Ovary (tissue), 10 donors: ENCODE measurements at regions of chr22 and their contacts with region 1.

Region 1: GRCh38 chr22:31345331-31346254 is 553 bp downstream of the PATZ1 start:
- DNase-seq: peak; percentile 84 to 91 (median 89)
- H3K4me3 ChIP-seq: peak overlapping the region; percentile 73
- H3K27ac ChIP-seq: peak overlapping the region; percentile 65 to 72
- H3K4me1 ChIP-seq: peaks cover 10% of the 10 kb centered on the region
- H3K27me3 ChIP-seq: no peaks in the 10 kb centered on the region
- CTCF ChIP-seq: peak; percentile 76 to 97 (median 96)
- EP300 ChIP-seq: no peak
- POLR2A ChIP-seq: no peak

Region 2: DNA sequence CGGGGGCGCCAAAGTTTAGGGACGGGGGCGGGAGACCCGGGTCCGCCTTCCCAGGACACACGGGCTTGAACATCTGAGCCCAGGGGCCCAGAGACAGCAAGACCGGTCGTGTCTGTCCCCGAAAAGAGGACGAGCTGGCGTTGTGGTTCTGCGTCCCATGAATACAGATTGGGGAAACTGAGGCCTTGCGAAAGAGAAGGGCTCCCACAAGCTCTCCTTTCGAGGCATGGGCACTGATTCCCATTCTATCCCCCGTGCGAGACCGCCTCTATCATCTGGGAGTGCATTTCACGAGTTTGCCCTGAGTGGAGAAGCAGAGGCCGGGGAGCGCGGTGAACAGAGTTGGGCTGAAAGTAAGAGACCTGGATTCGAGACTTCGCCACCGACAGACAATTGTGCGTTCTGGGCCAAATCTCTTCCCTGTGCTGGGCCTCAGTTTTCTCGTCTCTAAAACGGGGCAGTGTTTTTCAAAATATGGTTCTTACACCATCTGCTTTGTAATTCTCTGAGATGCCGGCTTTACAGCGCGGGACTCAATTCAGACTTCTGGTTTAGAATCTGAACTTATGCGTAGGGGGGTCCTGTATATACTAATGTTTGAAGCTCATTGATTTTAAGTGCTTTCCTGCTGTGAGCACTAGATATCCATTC is 185.1 kb before region 1 on chr22:
- intact Hi-C with region 1: no loop called
- DNase-seq: no peak
- H3K4me3 ChIP-seq: peak overlapping the region; percentile 93
- H3K27ac ChIP-seq: peak overlapping the region; percentile 77 to 79
- H3K4me1 ChIP-seq: peaks cover 8% of the 10 kb centered on the region
- H3K27me3 ChIP-seq: no peaks in the 10 kb centered on the region
- CTCF ChIP-seq: no peak
- EP300 ChIP-seq: no peak
- POLR2A ChIP-seq: no peak

Region 3: DNA sequence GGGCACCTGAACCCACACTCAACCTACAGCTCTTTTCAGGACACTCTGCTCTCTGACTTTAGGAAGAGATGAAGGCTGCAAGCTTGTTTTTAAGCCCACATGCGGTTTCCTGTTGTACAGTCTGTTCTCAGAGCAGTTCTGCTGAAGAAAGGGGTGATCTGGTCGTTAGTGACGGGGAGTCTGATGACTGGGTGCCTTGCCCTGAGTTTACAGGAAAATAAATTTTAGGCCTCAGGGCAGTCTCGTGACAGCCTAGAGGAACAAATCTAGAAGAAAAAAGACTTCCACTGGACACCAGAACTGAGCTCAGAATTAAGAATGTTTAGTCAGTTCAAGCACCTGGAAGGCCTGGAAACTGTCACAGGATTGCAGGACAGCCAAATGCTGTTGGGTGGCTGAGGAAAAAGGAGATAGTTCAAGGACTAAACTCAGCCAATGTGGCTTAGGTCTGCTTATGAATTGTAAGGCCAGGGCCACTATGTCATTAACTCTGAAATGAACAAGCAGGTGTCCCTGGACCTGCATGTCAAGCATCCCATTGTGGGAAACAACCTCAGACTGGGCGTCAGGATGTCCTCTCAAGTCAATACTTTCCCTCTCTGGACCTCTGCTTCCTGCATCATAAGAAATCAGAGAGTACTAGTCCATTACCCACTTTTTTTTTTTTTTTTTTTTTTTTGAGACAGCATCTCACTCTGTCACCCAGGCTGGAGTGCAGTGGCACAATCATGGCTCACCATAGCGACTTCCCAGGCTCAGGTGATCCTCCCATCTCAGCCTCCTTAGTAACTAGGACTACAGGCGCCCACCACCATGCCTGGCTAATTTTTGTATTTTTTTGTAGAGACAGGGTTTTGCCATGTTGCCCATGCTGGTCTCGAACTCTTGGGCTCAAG is 59.0 kb before region 1 on chr22:
- intact Hi-C with region 1: no loop called
- DNase-seq: no peak
- H3K4me3 ChIP-seq: no peak overlapping the region
- H3K27ac ChIP-seq: no peak overlapping the region
- H3K4me1 ChIP-seq: peaks cover 4% of the 10 kb centered on the region
- H3K27me3 ChIP-seq: no peaks in the 10 kb centered on the region
- CTCF ChIP-seq: no peak
- EP300 ChIP-seq: no peak
- POLR2A ChIP-seq: no peak

Region 4: DNA sequence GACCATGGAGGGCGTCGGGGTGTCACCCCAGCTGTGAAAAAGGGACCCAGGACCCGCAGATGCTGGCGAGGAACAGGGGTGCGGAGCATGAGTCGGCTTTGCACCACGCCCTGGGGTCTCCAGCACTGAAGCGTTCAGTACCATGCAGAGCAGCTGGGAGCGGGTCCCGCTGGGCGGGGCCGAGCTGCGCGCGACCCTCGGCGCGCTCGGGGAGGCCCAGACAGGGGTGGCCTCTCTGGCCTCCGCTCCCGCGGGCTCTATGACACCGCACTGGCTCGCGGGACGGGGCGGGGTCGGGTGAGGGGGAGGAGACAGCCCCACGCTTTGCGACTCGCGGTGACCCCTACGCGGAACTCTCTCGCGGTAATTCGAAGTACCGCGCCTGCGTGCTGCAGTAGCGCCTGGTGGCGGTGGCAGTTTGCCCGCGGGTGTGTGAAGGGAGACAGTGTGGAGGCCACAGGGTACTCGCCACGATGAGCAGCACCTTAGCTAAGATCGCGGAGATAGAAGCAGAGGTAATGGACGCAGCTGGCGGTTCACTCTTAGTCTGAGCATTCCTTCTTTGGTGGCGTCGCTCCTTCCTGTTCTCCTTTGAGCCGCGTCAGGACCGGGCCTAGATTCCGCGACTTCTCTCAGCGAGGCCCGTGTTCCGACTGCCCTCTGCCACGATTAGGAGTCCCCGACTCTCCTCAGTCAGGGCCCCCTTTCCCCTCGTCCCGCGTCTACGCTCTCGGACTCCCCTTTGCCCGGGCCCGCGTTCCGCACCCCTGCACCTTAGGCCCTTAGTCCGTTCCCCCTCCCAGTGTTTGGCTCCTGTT is 53.8 kb after region 1 on chr22 and contains the start of gene DRG1:
- intact Hi-C with region 1: loop called in 3 of 4 experiments (anchors 5 to 10 kb)
- DNase-seq: peak; percentile 97 to 99 (median 98)
- H3K4me3 ChIP-seq: peak within 1 kb of the TSS; percentile 54
- H3K27ac ChIP-seq: peak within 1 kb of the TSS; percentile 23 to 73
- H3K4me1 ChIP-seq: peaks cover 3% of the 10 kb centered on the region
- H3K27me3 ChIP-seq: no peaks in the 10 kb centered on the region
- CTCF ChIP-seq: peak in 1 of 3 donors; percentile 42
- EP300 ChIP-seq: no peak
- POLR2A ChIP-seq: peak; percentile 72
- total RNA-seq, gene DRG1: 46.8 to 71.8 (median 54.4) TPM

Region 5: DNA sequence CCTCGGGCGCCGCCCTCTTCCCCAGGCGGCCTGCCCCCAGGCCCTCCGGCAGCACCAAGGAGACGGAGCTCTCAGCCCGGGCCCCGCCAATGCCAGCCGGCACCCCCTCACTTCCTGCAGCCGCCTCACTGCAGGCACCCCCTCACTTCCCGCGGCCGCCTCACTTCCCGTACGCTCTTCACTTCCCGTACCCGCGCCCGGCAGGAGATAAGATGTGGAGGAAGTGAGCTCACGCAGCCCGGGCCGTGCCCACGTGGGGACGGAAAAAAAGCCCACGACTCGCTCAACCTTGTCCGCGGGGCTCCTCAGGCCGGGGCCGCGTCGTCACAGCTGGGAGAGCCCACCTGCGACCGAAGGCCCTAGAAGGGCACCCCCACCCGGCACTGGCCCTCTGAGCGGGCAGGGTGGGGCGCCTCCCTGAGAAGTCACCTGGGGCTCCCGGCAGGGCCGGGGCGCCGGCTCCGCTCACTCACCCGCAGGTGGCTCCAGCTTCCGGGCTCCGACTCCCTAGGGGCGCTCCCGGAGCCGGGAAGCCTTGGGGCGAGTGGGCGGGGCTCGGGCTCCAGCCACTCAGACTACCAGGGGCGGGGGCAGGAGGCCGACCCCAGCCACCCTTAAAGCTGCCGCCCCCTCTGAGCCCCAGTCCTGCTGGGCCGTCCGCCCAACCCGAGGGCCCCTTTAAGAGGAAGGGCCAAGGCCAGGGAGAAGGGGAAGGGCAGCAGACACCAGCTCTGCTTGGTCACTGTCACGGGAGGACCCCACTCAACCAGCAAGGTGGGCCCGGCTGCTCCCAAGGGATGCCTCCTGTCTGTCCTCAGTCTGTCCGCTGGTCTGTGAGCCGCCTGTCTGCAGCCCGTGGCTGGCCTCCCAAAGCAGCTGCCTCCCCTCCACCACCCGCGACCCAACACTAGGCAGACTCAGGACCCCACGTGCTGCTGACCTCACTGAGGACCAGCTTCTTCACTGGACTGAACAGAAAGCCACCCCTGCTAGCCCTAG is 285.0 kb after region 1 on chr22:
- intact Hi-C with region 1: loop called in 1 of 4 experiments (anchors 10 kb)
- DNase-seq: peak; percentile 78 to 85 (median 80)
- H3K4me3 ChIP-seq: peak overlapping the region; percentile 54
- H3K27ac ChIP-seq: peak overlapping the region; percentile 67 to 68
- H3K4me1 ChIP-seq: peaks cover 40% of the 10 kb centered on the region
- H3K27me3 ChIP-seq: no peaks in the 10 kb centered on the region
- CTCF ChIP-seq: no peak
- EP300 ChIP-seq: no peak
- POLR2A ChIP-seq: peak; percentile 43